IMR-90 (cell line): ENCODE measurements at regions of chr1 and their contacts with region 1.

Region 1: DNA sequence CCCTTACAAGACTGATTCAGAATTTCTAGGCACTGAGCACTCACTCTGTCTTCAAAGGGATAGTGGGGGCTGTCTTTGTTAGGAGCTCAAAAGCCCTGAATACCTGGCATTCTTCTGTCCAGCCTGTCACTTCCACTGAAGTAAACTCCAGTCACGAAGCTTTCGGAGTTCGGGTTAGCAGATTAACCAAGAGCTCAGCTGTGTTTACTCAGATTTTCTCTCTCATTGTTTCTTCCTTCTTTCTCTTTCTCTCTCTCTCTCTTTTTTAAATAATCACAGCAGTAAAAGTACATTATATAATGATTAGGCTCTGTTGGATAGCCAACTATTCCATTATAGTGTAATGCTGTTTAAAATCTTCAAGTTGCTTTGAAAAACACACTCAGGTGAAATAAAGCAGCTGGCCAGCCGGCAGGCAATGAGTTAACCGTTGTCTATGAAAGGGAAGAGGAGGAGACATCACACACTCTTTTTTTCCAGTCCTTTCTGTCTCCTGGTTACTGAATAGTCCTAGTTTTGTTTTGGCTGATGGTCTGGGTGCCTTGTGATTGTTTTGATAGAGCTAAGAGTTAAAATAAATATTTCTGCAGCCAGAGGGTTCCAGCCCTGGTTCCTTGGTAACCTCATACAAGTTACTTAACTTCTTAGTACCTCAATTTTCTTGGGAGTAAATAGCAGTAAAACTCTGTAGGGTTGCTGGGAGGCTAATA is 89.8 kb downstream of the ADSS2 start:
- DNase-seq: peak; percentile 86
- ATAC-seq: peak; percentile 95
- H3K4me3 ChIP-seq: peak overlapping the region; percentile 34
- H3K27ac ChIP-seq: peak overlapping the region; percentile 92
- H3K4me1 ChIP-seq: peaks cover 9% of the 10 kb centered on the region
- H3K27me3 ChIP-seq: no peaks in the 10 kb centered on the region
- CTCF ChIP-seq: no peak
- POLR2A ChIP-seq: no peak
- RAD21 ChIP-seq: no peak

Region 2: GRCh38 chr1:244628789-244629188 is 266.9 kb after region 1 on chr1:
- CTCF ChIA-PET with region 1: no interaction called
- POLR2A ChIA-PET with region 1: interaction called, 13 read pairs
- dilution Hi-C with region 1: no loop called
- in situ Hi-C with region 1: no loop called
- intact Hi-C with region 1: no loop called
- DNase-seq: peak; percentile 4
- ATAC-seq: no peak
- H3K4me3 ChIP-seq: no peak overlapping the region
- H3K27ac ChIP-seq: no peak overlapping the region
- H3K4me1 ChIP-seq: no peaks in the 10 kb centered on the region
- H3K27me3 ChIP-seq: peaks cover 5% of the 10 kb centered on the region
- CTCF ChIP-seq: no peak
- POLR2A ChIP-seq: no peak
- RAD21 ChIP-seq: no peak

Region 3: GRCh38 chr1:245874942-245875580 is 1513.1 kb after region 1 on chr1:
- CTCF ChIA-PET with region 1: no interaction called
- POLR2A ChIA-PET with region 1: no interaction called
- dilution Hi-C with region 1: no loop called
- in situ Hi-C with region 1: no loop called
- intact Hi-C with region 1: no loop called
- DNase-seq: peak; percentile 100
- ATAC-seq: peak; percentile 74
- H3K4me3 ChIP-seq: no peak overlapping the region
- H3K27ac ChIP-seq: peak overlapping the region; percentile 91
- H3K4me1 ChIP-seq: peaks cover 45% of the 10 kb centered on the region
- H3K27me3 ChIP-seq: no peaks in the 10 kb centered on the region
- CTCF ChIP-seq: no peak
- POLR2A ChIP-seq: no peak
- RAD21 ChIP-seq: peak; percentile 3; the same call in 1 of the 2 replicates